Activated naive CD4-positive, alpha-beta T cell treated with anti-CD3 and anti-CD28 coated beads for 36 hours (primary cell): ENCODE measurements at regions of chr17 and their contacts with region 1.

Region 1: GRCh38 chr17:64129764-64130558 is at the start of gene ERN1:
- DNase-seq: peak; percentile 92
- H3K4me3 Mint-ChIP-seq: peak within 1 kb of the TSS; percentile 90
- H3K27ac Mint-ChIP-seq: peak within 1 kb of the TSS; percentile 92
- H3K4me1 Mint-ChIP-seq: peaks cover 52% of the 10 kb centered on the region
- H3K27me3 Mint-ChIP-seq: no peaks in the 10 kb centered on the region
- total RNA-seq, gene ERN1: 21.9 to 22.0 TPM

Region 2: GRCh38 chr17:63773381-63774140 is 356.4 kb before region 1 on chr17 and contains the start of gene CCDC47:
- CTCF ChIA-PET with region 1: no interaction called
- intact Hi-C with region 1: loop called (anchors 5 kb)
- DNase-seq: peak; percentile 99
- H3K4me3 Mint-ChIP-seq: peak within 1 kb of the TSS; percentile 98
- H3K27ac Mint-ChIP-seq: peak within 1 kb of the TSS; percentile 100
- H3K4me1 Mint-ChIP-seq: peaks cover 58% of the 10 kb centered on the region
- H3K27me3 Mint-ChIP-seq: no peaks in the 10 kb centered on the region
- total RNA-seq, gene CCDC47: 40.5 to 42.1 TPM

Region 3: GRCh38 chr17:63946440-63947367 is 183.3 kb before region 1 on chr17:
- CTCF ChIA-PET with region 1: interaction called, 11 read pairs
- intact Hi-C with region 1: no loop called
- DNase-seq: peak; percentile 74
- H3K4me3 Mint-ChIP-seq: peak overlapping the region; percentile 28
- H3K27ac Mint-ChIP-seq: no peak overlapping the region
- H3K4me1 Mint-ChIP-seq: peaks cover 8% of the 10 kb centered on the region
- H3K27me3 Mint-ChIP-seq: no peaks in the 10 kb centered on the region

Region 4: DNA sequence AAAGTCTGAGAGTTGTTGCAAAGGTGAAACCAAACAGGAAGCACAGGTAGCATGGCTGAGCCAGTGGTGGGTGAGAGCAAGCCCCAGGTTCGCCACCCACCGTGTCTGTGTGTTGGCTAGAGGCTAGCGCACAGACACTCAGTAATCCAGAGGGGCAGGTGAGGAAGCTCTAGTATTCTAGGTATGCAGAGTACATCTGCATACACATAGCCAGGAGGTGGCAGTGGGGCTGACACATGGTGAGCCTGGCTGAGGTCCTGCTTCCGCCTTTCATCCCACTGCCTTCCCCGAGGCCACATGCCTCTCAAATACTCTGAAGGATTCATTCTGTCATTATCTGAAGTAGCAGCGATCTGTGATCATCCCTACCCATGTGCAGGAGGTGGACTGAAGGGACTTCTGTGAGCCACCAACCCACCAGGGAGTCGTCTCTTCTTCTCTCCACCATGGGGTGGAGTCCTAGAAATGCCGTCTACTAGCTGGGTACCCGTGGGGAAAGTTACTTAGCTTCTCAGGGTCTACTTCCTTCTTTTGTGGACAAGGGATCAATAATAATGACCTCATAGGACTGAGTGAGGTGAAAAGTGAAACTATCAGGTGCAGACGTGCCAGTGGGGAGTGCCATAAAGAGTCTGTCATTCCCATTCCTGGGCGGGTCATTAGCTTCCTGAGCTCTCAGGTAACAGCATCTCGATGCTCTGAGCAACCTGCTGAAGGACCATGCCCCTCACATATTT is 73.5 kb before region 1 on chr17:
- CTCF ChIA-PET with region 1: interaction called, 189 read pairs
- intact Hi-C with region 1: no loop called
- DNase-seq: no peak
- H3K4me3 Mint-ChIP-seq: no peak overlapping the region
- H3K27ac Mint-ChIP-seq: no peak overlapping the region
- H3K4me1 Mint-ChIP-seq: peaks cover 35% of the 10 kb centered on the region
- H3K27me3 Mint-ChIP-seq: no peaks in the 10 kb centered on the region

Region 5: DNA sequence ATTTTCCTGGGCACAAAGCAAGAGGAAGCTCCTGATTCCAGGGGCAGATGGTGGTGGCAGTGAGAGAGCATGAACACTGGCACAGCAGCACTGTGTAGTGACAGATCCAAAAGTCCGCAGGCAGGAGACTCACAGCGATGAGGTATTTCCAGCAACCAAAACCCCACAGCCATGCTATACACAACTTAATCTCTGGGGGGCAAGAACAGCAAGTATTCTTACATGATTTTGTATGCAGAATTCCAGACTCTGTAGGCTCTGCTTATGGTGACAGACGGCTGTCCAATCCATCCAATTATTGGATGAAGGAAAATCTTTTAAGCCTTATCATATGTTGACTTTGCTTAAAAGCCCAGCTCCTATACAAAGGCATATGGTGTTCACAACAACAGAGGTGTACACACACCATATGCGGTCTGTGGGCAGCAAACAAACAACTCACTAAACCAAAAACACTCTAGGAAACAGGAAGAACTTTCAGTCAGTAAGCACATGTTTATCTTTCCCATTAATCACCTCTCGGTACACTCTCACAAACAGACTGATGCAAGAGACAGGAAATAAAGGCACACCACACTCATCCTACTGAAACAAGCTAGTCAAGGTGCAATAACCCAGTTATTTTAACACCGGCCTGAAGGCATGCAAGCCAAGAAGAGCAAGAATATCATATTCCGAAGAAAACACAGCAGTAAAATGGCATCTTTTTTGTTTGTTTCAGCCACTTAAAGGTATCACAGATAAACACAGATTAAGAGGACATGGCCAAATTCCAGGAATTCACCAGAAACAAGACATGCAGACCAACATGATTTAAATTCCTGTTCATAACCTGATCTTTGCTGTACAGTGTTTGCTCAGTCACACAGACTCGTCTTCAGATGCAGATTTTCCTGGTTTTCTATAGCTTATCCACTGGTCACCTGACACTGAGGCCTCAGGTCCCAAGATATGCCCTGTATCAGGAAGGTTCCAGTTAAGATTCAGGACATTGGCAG is 47.9 kb before region 1 on chr17:
- CTCF ChIA-PET with region 1: interaction called, 17 read pairs
- intact Hi-C with region 1: loop called (anchors 1 kb)
- DNase-seq: peak; percentile 65
- H3K4me3 Mint-ChIP-seq: peak overlapping the region; percentile 38
- H3K27ac Mint-ChIP-seq: no peak overlapping the region
- H3K4me1 Mint-ChIP-seq: peaks cover 7% of the 10 kb centered on the region
- H3K27me3 Mint-ChIP-seq: no peaks in the 10 kb centered on the region

Region 6: GRCh38 chr17:64281962-64282727 is 152.2 kb after region 1 on chr17:
- CTCF ChIA-PET with region 1: interaction called, 22 read pairs
- intact Hi-C with region 1: loop called (anchors 1 kb)
- DNase-seq: peak; percentile 67
- H3K4me3 Mint-ChIP-seq: no peak overlapping the region
- H3K27ac Mint-ChIP-seq: no peak overlapping the region
- H3K4me1 Mint-ChIP-seq: peaks cover 4% of the 10 kb centered on the region
- H3K27me3 Mint-ChIP-seq: no peaks in the 10 kb centered on the region

Region 7: GRCh38 chr17:64687961-64688360 is 558.0 kb after region 1 on chr17:
- CTCF ChIA-PET with region 1: no interaction called
- intact Hi-C with region 1: no loop called
- DNase-seq: no peak
- H3K4me3 Mint-ChIP-seq: no peak overlapping the region
- H3K27ac Mint-ChIP-seq: no peak overlapping the region
- H3K4me1 Mint-ChIP-seq: no peaks in the 10 kb centered on the region
- H3K27me3 Mint-ChIP-seq: no peaks in the 10 kb centered on the region